ENCODE measurements at regions of chr2 and their contacts with region 1.

Region 1: DNA sequence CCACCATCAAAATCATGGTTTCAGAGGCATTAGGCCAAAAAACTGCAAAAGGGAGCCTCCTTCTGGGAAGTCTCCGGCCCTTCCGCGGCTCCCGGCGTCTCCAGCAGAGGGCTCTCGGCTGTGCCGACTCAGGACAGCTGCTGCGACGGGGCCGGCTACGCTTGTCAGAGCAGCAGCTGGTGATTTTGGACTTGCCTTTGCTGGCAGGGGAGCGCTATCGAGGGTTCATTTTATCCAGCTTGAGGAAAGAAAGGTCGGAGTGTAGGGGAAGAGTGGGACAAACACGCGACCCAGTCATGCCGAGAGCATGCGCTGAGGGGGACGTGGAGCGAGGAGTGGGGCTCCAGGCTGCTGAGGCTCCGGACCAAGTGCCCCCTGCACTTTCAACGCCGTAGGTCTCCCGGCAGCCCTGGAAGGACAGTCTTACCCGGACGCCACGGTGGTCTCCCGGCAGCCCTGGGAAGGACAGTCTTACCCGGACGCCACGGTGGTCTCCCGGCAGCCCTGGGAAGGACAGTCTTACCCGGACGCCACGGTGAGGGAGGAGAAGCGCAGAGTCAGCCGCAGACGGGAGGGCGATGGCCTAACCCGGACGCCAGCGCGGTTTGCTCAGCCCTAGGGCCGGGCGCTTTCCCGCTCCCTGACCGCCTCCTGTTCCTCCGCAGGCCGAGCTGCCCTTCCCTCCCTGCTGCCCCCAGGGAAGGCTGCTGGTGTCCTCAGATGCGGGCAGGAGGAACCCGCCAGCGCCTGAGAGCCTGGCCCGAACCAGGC is 21.7 kb downstream of the DDX18 start:
- DNase-seq: peak; percentile 59
- H3K4me3 ChIP-seq: peak overlapping the region; percentile 57
- H3K27ac ChIP-seq: no peak overlapping the region
- H3K27me3 ChIP-seq: no peaks in the 10 kb centered on the region
- CTCF ChIP-seq: peak; percentile 97

Region 2: DNA sequence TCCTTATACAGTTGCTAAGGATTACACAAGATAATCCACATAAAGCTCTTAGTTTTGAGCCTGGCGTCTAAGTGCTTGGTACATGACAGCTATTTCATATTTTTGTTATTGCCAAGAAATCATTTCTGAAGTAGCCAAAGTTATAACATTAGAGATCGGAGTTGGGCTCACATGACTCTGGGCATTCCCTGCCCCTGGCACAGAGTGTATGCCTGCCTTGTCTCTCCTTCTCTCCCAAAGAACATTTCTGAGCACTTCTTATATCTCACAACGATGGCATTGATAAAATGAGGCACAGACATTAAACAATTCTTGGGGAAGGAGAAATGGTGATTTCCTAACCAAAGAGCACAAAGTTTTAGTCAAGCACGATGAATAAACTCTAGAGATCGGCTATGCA is 109.4 kb before region 1 on chr2:
- CTCF ChIA-PET with region 1: no interaction called
- POLR2A ChIA-PET with region 1: no interaction called
- DNase-seq: no peak
- H3K4me3 ChIP-seq: no peak overlapping the region
- H3K27ac ChIP-seq: no peak overlapping the region
- H3K27me3 ChIP-seq: no peaks in the 10 kb centered on the region
- CTCF ChIP-seq: no peak

Region 3: DNA sequence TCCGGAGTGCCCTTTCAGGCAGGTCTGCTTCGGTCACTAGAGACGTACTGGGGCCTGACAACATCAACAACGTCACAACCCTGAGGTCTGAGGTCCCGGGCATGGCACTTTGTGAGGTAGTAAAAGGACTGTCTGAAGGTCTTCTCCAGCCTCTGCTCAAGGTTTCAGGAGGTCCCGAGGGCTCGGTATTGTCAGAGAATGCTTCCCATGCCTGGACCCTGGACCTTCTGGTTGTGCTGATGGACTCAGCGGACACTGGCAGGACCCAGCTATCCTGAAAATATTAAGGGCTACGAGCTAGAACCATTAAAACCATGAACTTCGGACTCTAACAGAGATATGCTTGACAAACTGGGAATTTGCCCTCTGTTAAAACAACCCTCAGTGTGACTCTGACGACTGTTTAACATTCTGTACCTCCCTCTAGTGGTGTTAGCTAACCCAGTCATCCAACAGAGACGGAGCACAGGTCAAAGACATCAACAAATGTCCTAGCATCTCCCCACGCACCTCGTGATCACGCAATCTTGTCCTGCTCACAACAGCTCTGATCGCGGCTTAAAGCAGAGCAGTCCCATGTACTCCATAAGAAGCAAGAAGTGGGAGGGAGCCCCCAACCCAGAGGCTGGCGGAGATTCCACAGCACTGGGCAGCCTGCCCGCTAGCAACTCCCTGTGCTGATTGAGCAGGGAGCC is 81.2 kb after region 1 on chr2:
- CTCF ChIA-PET with region 1: interaction called, 10 read pairs
- POLR2A ChIA-PET with region 1: no interaction called
- DNase-seq: no peak
- H3K4me3 ChIP-seq: no peak overlapping the region
- H3K27ac ChIP-seq: no peak overlapping the region
- H3K27me3 ChIP-seq: no peaks in the 10 kb centered on the region
- CTCF ChIP-seq: peak; percentile 51

Region 4: GRCh38 chr2:118431165-118431517 is 595.0 kb after region 1 on chr2:
- CTCF ChIA-PET with region 1: no interaction called
- POLR2A ChIA-PET with region 1: no interaction called
- DNase-seq: no peak
- H3K4me3 ChIP-seq: no peak overlapping the region
- H3K27ac ChIP-seq: no peak overlapping the region
- H3K27me3 ChIP-seq: no peaks in the 10 kb centered on the region
- CTCF ChIP-seq: peak; percentile 7; the same call in 1 of the 2 replicates